ENCODE measurements at regions of chr2 and their contacts with region 1.

Region 1: DNA sequence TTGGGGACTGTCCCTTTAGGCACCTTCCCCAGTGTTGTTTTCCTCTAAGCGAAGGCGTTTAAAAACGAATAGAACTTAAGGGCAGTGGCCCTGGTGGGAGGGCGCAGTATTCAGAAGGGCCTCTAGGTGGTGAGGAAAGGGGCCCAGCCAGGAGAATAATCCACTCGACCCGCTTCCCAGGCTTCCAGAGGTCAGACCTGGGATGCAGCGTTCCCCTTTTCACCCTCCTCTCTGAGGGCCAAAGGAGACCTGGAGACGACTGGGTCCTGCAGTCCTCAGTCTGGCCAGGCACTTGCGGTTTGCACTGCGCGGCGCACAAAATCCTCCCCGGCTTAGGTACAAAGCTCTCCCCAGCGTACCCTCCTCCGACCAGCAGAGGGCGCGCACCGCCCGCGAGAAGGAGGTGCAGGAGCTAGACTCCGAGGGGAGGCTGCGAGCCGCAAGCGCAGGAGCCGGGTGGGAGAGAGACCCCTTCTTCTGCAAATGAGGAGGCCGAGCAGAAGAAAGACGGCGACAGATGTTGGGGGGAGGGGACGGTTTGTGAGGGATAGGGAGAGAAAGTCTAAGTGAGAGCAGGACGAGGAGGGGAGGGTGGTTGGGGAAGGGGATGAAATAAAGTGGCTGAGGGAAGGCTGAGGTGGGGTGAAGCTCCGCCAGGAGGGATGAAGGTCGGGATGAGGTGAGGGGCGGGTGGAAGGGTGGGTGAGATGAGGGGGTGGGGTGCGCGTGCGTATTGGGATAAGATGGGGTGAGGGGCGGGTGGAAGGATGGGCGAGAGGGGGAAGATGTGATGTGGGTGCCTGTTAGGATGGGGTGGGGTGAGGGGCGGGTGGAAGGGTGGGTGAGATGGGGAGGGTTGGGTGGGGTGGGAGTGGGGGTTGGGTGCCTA is 4.9 kb downstream of the FEV start:
- DNase-seq: peak; percentile 96
- ATAC-seq: peak; percentile 80
- H3K4me3 Mint-ChIP-seq: peak overlapping the region; percentile 60
- H3K27ac Mint-ChIP-seq: no peak overlapping the region
- H3K4me1 Mint-ChIP-seq: peaks cover 25% of the 10 kb centered on the region
- H3K27me3 Mint-ChIP-seq: peaks cover 99% of the 10 kb centered on the region
- CTCF ChIP-seq: peak; percentile 74; the same call in 1 of the 2 replicates

Region 2: DNA sequence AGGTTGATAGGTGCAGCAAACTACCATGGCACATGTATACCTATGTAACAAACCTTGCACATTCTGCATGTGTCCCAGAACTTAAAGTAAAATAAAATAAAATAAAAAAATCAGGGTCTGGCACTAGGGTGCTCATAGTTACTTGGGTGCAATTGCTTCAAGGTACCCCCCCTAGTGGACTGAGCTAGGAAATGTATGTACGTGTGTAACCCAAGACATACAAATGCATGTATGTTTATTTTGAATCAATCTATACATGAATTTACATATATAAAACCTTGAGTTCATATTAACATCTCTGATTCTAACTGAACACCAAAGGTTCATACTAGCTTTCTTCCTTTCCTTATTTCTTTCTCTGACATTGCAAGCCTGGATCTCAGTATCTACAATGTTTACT is 463.5 kb before region 1 on chr2:
- CTCF ChIA-PET with region 1: no interaction called
- POLR2A ChIA-PET with region 1: no interaction called
- DNase-seq: no peak
- ATAC-seq: peak; percentile 60; the same call in 1 of the 2 replicates
- H3K4me3 Mint-ChIP-seq: no peak overlapping the region
- H3K27ac Mint-ChIP-seq: no peak overlapping the region
- H3K4me1 Mint-ChIP-seq: no peaks in the 10 kb centered on the region
- H3K27me3 Mint-ChIP-seq: no peaks in the 10 kb centered on the region
- CTCF ChIP-seq: peak; percentile 41

Region 3: DNA sequence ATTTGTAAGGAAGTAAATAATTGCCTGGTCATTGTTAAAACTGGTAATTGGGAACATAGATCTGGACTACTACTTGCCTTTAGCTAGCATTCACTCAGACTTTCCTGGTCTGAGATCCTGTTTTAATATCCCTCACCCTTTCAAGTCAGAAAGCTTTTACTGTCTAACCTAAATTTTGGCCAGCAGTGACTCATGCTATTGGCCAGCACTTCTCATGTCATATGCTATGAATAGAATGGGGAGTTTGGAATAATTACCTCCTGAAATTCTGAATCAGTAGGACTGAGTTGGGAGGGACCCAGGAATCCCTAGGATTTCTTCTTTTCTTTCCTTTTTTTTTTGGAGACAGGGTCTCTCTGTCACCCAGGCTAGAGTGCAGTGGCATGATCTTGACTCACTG is 288.9 kb before region 1 on chr2:
- CTCF ChIA-PET with region 1: no interaction called
- POLR2A ChIA-PET with region 1: no interaction called
- DNase-seq: no peak
- ATAC-seq: no peak
- H3K4me3 Mint-ChIP-seq: no peak overlapping the region
- H3K27ac Mint-ChIP-seq: no peak overlapping the region
- H3K4me1 Mint-ChIP-seq: no peaks in the 10 kb centered on the region
- H3K27me3 Mint-ChIP-seq: no peaks in the 10 kb centered on the region
- CTCF ChIP-seq: no peak

Region 4: GRCh38 chr2:218761795-218762194 is 218.3 kb before region 1 on chr2:
- CTCF ChIA-PET with region 1: no interaction called
- POLR2A ChIA-PET with region 1: no interaction called
- DNase-seq: no peak
- ATAC-seq: no peak
- H3K4me3 Mint-ChIP-seq: no peak overlapping the region
- H3K27ac Mint-ChIP-seq: no peak overlapping the region
- H3K4me1 Mint-ChIP-seq: no peaks in the 10 kb centered on the region
- H3K27me3 Mint-ChIP-seq: no peaks in the 10 kb centered on the region
- CTCF ChIP-seq: no peak

Region 5: DNA sequence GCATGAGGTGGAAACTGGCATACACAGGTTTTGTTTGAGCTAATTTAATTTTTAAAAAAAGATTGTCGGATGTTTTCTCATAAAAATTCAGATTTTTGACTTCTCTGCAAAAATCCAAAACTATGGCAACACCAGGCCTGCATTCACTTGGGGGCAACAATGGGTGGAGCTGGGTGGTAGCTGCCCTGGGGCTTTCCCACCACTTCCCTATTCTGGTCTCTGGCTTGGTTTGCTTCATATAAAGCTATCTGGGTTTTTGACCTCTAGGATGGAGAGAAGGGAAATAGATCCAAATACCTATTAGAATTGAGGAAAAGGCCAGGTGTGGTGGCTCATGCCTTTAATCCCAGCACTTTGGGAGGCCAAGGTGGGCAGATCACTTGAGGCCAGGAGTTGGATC is 203.6 kb before region 1 on chr2:
- CTCF ChIA-PET with region 1: no interaction called
- POLR2A ChIA-PET with region 1: no interaction called
- DNase-seq: no peak
- ATAC-seq: no peak
- H3K4me3 Mint-ChIP-seq: no peak overlapping the region
- H3K27ac Mint-ChIP-seq: no peak overlapping the region
- H3K4me1 Mint-ChIP-seq: peaks cover 8% of the 10 kb centered on the region
- H3K27me3 Mint-ChIP-seq: peaks cover 27% of the 10 kb centered on the region
- CTCF ChIP-seq: no peak

Region 6: DNA sequence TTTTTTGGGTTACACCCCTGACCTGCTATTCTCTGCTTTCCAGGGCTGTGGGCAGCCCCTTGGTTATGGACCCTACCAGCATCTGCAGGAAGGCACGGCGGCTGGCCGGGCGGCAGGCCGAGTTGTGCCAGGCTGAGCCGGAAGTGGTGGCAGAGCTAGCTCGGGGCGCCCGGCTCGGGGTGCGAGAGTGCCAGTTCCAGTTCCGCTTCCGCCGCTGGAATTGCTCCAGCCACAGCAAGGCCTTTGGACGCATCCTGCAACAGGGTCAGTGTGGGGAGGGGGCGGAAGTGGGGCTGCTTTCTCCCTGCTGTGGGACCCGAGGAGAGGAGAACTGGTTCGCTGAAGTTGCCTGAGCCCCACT is 109.1 kb before region 1 on chr2:
- CTCF ChIA-PET with region 1: interaction called, 98 read pairs
- POLR2A ChIA-PET with region 1: no interaction called
- DNase-seq: no peak
- ATAC-seq: no peak
- H3K4me3 Mint-ChIP-seq: no peak overlapping the region
- H3K27ac Mint-ChIP-seq: no peak overlapping the region
- H3K4me1 Mint-ChIP-seq: peaks cover 19% of the 10 kb centered on the region
- H3K27me3 Mint-ChIP-seq: peaks cover 100% of the 10 kb centered on the region
- CTCF ChIP-seq: no peak

Region 7: DNA sequence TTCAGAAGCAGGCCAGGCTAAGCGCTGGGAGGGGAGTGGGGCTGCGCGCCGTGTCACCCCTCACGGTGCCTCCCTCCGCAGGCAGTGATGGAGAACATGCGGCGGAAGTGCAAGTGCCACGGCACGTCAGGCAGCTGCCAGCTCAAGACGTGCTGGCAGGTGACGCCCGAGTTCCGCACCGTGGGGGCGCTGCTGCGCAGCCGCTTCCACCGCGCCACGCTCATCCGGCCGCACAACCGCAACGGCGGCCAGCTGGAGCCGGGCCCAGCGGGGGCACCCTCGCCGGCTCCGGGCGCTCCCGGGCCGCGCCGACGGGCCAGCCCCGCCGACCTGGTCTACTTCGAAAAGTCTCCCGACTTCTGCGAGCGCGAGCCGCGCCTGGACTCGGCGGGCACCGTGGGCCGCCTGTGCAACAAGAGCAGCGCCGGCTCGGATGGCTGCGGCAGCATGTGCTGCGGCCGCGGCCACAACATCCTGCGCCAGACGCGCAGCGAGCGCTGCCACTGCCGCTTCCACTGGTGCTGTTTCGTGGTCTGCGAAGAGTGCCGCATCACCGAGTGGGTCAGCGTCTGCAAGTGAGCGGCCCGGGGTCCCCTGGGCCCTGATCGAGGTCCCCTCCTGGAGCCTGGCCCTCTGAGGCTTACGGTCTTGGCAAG is 87.3 kb before region 1 on chr2:
- CTCF ChIA-PET with region 1: interaction called, 76 read pairs
- POLR2A ChIA-PET with region 1: no interaction called
- DNase-seq: peak; percentile 72
- ATAC-seq: peak; percentile 61
- H3K4me3 Mint-ChIP-seq: peak overlapping the region; percentile 61
- H3K27ac Mint-ChIP-seq: no peak overlapping the region
- H3K4me1 Mint-ChIP-seq: peaks cover 15% of the 10 kb centered on the region
- H3K27me3 Mint-ChIP-seq: peaks cover 99% of the 10 kb centered on the region
- CTCF ChIP-seq: no peak

Region 8: GRCh38 chr2:218953481-218953881 is 26.6 kb before region 1 on chr2:
- CTCF ChIA-PET with region 1: interaction called, 116 read pairs
- POLR2A ChIA-PET with region 1: no interaction called
- DNase-seq: peak; percentile 61
- ATAC-seq: peak; percentile 81
- H3K4me3 Mint-ChIP-seq: no peak overlapping the region
- H3K27ac Mint-ChIP-seq: no peak overlapping the region
- H3K4me1 Mint-ChIP-seq: no peaks in the 10 kb centered on the region
- H3K27me3 Mint-ChIP-seq: peaks cover 68% of the 10 kb centered on the region
- CTCF ChIP-seq: no peak

Region 9: DNA sequence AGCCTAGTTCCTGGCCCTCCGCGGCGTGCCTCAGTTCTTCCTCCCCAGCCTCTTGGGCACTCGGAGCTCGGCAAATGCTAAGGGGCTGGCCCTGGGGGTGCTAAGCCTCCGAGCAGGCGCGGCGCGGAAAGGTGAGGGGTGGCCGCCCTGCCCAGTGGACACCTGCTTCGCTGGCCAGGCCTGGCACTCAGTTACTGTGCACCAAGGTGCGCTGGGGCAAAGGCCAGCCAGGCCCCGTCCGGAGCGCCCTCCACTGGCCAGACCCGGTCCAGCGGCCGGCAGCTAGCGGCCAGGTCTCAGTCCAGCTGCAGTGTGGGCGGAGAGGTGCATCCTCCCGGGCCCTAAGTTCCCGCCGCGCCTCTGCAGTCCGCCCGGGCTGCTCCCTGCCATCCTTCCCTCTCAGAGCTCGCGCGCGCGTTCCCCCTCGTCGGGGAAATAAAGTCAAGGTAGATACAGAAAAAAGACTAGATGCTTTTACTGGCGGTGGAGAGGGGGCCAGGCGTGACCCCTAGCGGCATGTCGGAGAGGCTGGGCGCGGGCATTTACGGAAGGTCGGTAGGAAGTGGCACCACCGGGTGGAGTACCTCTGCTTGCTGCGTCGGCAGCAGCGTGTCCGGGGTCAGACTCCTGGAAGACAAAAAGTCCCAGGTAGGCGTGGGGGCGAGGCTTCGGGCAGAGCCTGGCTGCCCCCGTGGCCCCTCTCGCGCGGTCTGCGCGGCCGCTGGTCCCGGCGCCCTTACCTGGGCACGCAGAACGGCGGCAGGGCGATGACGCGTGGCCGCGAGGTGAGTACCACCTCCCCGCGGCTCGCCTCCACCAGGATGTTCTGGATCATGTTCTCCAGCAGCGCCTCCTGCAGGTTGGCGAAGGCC is 22.5 kb after region 1 on chr2:
- CTCF ChIA-PET with region 1: interaction called, 158 read pairs
- POLR2A ChIA-PET with region 1: interaction called, 5 read pairs
- DNase-seq: peak; percentile 95
- ATAC-seq: peak; percentile 69
- H3K4me3 Mint-ChIP-seq: peak overlapping the region; percentile 83
- H3K27ac Mint-ChIP-seq: no peak overlapping the region
- H3K4me1 Mint-ChIP-seq: peaks cover 22% of the 10 kb centered on the region
- H3K27me3 Mint-ChIP-seq: peaks cover 100% of the 10 kb centered on the region
- CTCF ChIP-seq: peak; percentile 29; the same call in 1 of the 2 replicates

Region 10: GRCh38 chr2:219119422-219120043 is 139.4 kb after region 1 on chr2:
- CTCF ChIA-PET with region 1: interaction called, 16 read pairs
- POLR2A ChIA-PET with region 1: no interaction called
- DNase-seq: peak; percentile 81
- ATAC-seq: peak; percentile 78
- H3K4me3 Mint-ChIP-seq: no peak overlapping the region
- H3K27ac Mint-ChIP-seq: no peak overlapping the region
- H3K4me1 Mint-ChIP-seq: peaks cover 21% of the 10 kb centered on the region
- H3K27me3 Mint-ChIP-seq: no peaks in the 10 kb centered on the region
- CTCF ChIP-seq: peak; percentile 59

Measured in WTC11 (cell line).